ENCODE measurements at regions of chr17 and their contacts with region 1.

Region 1: DNA sequence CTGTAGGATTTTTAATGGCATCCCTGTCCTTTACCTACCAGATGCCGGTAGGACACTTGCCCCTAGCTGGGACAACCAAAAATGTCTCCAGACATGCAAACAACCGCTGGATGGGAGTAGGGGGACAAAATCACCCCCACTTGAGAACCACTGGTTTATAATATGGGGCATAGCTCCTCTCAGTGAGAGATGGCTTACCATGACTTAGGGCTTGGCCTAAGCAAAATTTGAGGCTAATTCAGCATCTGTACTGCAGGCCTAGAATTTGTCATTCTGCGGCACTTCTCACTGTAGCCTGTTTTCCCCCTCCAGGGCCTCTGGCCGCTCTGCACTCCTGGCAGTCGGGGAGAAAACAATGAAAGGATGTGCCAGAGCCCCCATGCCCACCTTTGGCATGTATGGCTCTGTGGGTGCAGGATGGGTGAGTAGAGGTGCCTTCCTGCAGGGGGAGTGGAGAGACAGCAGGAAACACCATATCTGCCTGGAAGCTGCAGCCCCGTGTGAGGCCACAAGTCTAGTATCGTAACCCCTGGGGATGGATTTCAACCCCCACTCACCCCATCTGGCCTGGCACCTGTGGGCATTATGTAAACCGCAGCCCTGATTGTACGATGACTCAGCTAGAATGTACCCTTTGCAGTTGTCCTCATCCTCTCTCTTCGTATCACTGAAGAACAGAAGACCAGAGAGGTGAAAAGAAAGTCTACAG is 268.1 kb downstream of the SOX9 start:
- DNase-seq: peak; percentile 83
- ATAC-seq: peak; percentile 74
- H3K4me3 ChIP-seq: peak overlapping the region in 1 of 2 experiments; percentile 19; a peak in 1 of 4 replicates
- H3K27ac ChIP-seq: peak overlapping the region; percentile 76
- H3K4me1 ChIP-seq: peaks cover 87 to 95% of the 10 kb centered on the region in 2 experiments
- H3K27me3 ChIP-seq: no peaks in the 10 kb centered on the region
- CTCF ChIP-seq: peak in 2 of 3 experiments; percentile 77 to 86; a peak in 5 of 6 replicates
- POLR2A ChIP-seq: no peak
- RAD21 ChIP-seq: peak; percentile 76

Region 2: GRCh38 chr17:72407336-72407909 is 18.5 kb after region 1 on chr17:
- CTCF ChIA-PET with region 1: interaction called, 3 read pairs
- POLR2A ChIA-PET with region 1: interaction called, 20 read pairs
- RAD21 ChIA-PET with region 1: no interaction called
- intact Hi-C with region 1: no loop called
- DNase-seq: peak; percentile 87
- ATAC-seq: peak; percentile 73
- H3K4me3 ChIP-seq: peak overlapping the region; percentile 32 to 44
- H3K27ac ChIP-seq: peak overlapping the region; percentile 86
- H3K4me1 ChIP-seq: peaks cover 77 to 93% of the 10 kb centered on the region in 2 experiments
- H3K27me3 ChIP-seq: no peaks in the 10 kb centered on the region
- CTCF ChIP-seq: no peak
- POLR2A ChIP-seq: no peak
- RAD21 ChIP-seq: no peak; the same call in 1 of the 2 replicates

Region 3: GRCh38 chr17:72421128-72422092 is 32.5 kb after region 1 on chr17:
- CTCF ChIA-PET with region 1: interaction called, 3 read pairs
- POLR2A ChIA-PET with region 1: interaction called, 3 read pairs
- RAD21 ChIA-PET with region 1: interaction called in 1 of 2 experiments, 4 read pairs
- intact Hi-C with region 1: loop called (anchors 2 kb)
- DNase-seq: peak; percentile 99
- ATAC-seq: peak; percentile 84
- H3K4me3 ChIP-seq: peak overlapping the region; percentile 10 to 42; a peak in 2 of 4 replicates
- H3K27ac ChIP-seq: peak overlapping the region; percentile 78
- H3K4me1 ChIP-seq: peaks cover 54 to 89% of the 10 kb centered on the region in 2 experiments
- H3K27me3 ChIP-seq: no peaks in the 10 kb centered on the region
- CTCF ChIP-seq: no peak
- POLR2A ChIP-seq: no peak
- RAD21 ChIP-seq: peak; percentile 58